ENCODE measurements at regions of chr14 and their contacts with region 1.

Region 1: DNA sequence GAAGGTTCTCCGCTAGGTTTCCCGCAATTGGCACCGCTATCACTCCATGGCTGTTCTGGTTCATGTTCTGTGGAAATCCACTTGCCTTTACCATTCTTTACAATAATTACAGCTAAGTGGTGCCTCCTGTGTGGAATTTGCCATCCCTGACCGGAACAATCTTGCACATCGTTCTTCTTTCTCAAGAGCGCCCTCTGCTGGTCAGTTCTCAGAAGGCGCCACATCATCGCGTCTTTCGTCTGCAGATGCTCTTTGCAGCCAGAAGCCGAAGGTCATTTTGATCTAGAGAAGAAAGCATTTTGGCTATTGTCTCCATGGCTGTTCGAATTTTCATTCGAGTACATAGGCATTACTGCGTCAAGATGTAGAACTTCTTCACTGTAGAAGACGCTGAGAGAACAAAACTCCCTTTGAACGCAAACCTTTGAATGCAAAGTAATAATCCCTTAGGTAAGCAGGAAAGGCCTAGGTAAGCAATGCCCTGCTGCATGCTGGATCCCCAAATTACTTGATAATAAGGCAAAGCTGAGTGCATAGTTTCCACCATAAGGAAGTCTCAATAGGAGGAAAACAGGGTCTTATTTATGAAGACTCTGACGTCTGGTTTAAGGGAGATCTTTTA is 10.1 kb upstream of the RTRAF start:
- DNase-seq: peak; percentile 66 to 90 (median 80)
- ATAC-seq: peak; percentile 91
- H3K4me3 ChIP-seq: no peak overlapping the region
- H3K4me3 Mint-ChIP-seq: no peak overlapping the region
- H3K27ac ChIP-seq: no peak overlapping the region
- H3K27ac Mint-ChIP-seq: no peak overlapping the region
- H3K4me1 ChIP-seq: peaks cover 8% of the 10 kb centered on the region
- H3K4me1 Mint-ChIP-seq: peaks cover 7% of the 10 kb centered on the region
- H3K27me3 ChIP-seq: no peaks in the 10 kb centered on the region
- H3K27me3 Mint-ChIP-seq: no peaks in the 10 kb centered on the region
- CTCF ChIP-seq: peak; percentile 98

Region 2: DNA sequence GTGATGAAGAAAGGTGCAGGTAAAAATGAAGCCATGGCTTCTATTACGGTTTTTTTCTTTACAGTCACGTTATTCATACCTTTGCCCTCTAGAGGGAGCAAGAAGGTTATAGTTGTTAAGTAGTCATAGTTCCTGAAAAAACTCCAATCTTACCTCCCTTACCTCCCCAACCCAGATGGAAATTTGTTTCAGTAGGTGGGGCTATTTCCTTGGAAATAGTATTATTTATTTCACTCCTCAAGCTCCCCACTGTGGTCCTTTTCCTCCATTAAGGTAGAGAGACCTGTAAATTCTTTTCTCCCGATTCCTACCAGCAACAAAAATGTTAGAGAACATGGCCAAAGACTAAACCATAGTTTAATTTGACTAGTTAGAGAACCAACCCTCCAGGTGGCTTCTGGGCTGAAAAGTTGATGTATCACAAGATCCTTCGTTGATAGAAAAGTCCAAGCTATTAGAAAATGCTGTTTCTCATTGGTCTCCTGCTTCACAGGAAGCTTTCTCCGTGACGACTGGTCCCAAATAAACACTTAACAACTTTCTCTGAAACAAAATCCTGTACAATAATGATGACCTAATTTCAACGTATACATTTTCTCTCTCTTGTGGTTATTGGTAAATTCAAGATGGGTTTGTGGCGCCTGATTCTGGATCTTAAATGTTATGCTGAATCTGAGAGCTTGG is 695.7 kb before region 1 on chr14:
- CTCF ChIA-PET with region 1: no interaction called
- POLR2A ChIA-PET with region 1: no interaction called
- intact Hi-C with region 1: loop called (anchors 1 to 2 kb)
- DNase-seq: peak in 3 of 14 experiments; percentile 56 to 62 (median 56)
- ATAC-seq: peak; percentile 49
- H3K4me3 ChIP-seq: no peak overlapping the region
- H3K4me3 Mint-ChIP-seq: no peak overlapping the region
- H3K27ac ChIP-seq: no peak overlapping the region
- H3K27ac Mint-ChIP-seq: no peak overlapping the region
- H3K4me1 ChIP-seq: no peaks in the 10 kb centered on the region
- H3K4me1 Mint-ChIP-seq: no peaks in the 10 kb centered on the region
- H3K27me3 ChIP-seq: no peaks in the 10 kb centered on the region
- H3K27me3 Mint-ChIP-seq: no peaks in the 10 kb centered on the region
- CTCF ChIP-seq: peak; percentile 84

Region 3: DNA sequence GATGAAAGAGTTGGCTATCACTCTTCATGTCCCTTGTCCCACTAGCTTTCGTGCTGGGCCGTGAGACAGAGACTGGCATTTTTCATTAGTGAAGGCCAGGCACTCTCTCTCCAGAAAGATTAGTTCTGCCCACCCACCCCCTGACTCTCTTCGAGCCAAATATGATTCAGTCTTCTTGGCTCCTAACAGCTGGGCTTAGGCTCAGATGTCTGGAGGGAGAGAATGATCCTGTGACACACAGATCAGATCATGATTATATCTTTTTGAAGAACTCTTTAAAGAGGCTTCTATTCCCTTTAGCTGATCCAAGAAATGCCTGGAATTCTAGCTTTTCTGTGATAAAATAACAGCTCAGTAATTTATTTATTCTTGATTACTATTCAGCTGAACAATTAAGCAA is 124.0 kb before region 1 on chr14:
- CTCF ChIA-PET with region 1: interaction called, 5 read pairs
- POLR2A ChIA-PET with region 1: no interaction called
- intact Hi-C with region 1: loop called in 1 of 2 experiments (anchors 5 kb)
- DNase-seq: no peak
- ATAC-seq: no peak
- H3K4me3 ChIP-seq: no peak overlapping the region
- H3K4me3 Mint-ChIP-seq: no peak overlapping the region
- H3K27ac ChIP-seq: no peak overlapping the region
- H3K27ac Mint-ChIP-seq: no peak overlapping the region
- H3K4me1 ChIP-seq: peaks cover 21% of the 10 kb centered on the region
- H3K4me1 Mint-ChIP-seq: peaks cover 66% of the 10 kb centered on the region
- H3K27me3 ChIP-seq: no peaks in the 10 kb centered on the region
- H3K27me3 Mint-ChIP-seq: no peaks in the 10 kb centered on the region
- CTCF ChIP-seq: no peak

Region 4: DNA sequence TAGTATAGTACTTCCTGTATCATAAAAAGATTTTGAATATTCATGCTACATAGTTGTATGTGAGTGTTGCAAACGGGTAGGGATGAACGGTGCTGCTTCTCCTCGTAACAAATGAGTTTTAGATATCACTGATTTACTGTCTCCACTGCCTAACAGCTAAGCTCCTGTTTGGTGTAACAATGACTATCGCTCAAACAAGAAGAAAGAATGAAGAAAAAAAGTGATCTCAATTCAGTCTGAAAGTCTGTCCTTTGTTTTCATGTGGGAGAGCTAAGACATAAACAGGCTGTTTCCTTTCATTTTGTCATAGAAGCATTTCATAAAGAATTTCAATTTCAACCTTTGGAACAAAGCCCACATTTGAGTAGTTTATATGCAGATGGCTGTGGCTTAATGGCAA is 15.9 kb before region 1 on chr14:
- CTCF ChIA-PET with region 1: interaction called, 15 read pairs
- POLR2A ChIA-PET with region 1: no interaction called
- intact Hi-C with region 1: no loop called
- DNase-seq: peak in 1 of 14 experiments; percentile 18
- ATAC-seq: peak; percentile 77
- H3K4me3 ChIP-seq: no peak overlapping the region
- H3K4me3 Mint-ChIP-seq: peak overlapping the region; percentile 80
- H3K27ac ChIP-seq: no peak overlapping the region
- H3K27ac Mint-ChIP-seq: peak overlapping the region; percentile 90
- H3K4me1 ChIP-seq: peaks cover 4% of the 10 kb centered on the region
- H3K4me1 Mint-ChIP-seq: peaks cover 60% of the 10 kb centered on the region
- H3K27me3 ChIP-seq: no peaks in the 10 kb centered on the region
- H3K27me3 Mint-ChIP-seq: no peaks in the 10 kb centered on the region
- CTCF ChIP-seq: no peak